Ascending aorta (tissue), 2 donors: ENCODE measurements at regions of chr12 and their contacts with region 1.

Region 1: DNA sequence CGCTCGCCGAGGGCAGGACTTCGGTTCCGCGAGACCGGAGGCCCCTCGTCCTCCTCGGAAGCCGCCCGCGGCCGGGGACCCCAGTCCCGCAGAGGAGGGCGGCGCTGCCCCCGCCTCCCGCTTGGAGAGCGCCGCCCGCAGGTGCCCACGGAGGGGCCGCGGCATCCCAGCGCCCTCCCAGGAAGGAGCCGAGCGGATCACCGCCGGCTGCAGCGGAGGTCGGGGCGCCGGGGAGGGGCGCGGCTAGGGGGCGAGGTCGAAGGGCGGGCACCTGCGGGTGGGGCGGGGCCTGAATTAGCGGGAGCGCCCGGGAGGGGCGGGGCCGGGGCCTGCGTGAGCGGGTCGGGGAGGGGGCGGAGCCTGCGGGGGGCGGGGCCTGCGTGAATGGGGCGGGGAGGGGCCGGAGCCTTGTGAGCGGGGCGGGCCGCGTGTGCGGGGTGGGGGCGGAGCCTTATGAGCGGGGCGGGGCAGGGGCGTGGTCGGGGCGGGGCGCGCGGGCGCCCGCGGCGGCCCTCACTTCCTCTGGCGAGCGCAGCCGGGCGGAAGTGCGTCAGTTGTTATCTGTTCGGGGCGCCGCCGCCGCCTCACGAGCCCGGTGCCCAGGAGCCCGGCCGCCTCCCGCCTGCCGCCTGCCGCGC is at the start of gene FBRSL1:
- DNase-seq: peak; percentile 47 to 94
- H3K4me3 ChIP-seq: peak within 1 kb of the TSS; percentile 79 to 92
- H3K27ac ChIP-seq: peak within 1 kb of the TSS; percentile 42 to 60
- H3K4me1 ChIP-seq: peaks cover 10 to 32% of the 10 kb centered on the region in 2 donors
- H3K27me3 ChIP-seq: no peaks in the 10 kb centered on the region
- CTCF ChIP-seq: no peak
- total RNA-seq, gene FBRSL1: 40.7 TPM

Region 2: GRCh38 chr12:131710464-131711457 is 779.0 kb before region 1 on chr12 and contains the start of gene SFSWAP:
- intact Hi-C with region 1: loop called (anchors 5 kb)
- DNase-seq: peak in 1 of 2 donors; percentile 78
- H3K4me3 ChIP-seq: peak within 1 kb of the TSS; percentile 69 to 73
- H3K27ac ChIP-seq: peak within 1 kb of the TSS; percentile 86 to 96
- H3K4me1 ChIP-seq: peaks cover 8 to 16% of the 10 kb centered on the region in 2 donors
- H3K27me3 ChIP-seq: no peaks in the 10 kb centered on the region
- CTCF ChIP-seq: no peak
- total RNA-seq, gene SFSWAP: 15.8 TPM

Region 3: DNA sequence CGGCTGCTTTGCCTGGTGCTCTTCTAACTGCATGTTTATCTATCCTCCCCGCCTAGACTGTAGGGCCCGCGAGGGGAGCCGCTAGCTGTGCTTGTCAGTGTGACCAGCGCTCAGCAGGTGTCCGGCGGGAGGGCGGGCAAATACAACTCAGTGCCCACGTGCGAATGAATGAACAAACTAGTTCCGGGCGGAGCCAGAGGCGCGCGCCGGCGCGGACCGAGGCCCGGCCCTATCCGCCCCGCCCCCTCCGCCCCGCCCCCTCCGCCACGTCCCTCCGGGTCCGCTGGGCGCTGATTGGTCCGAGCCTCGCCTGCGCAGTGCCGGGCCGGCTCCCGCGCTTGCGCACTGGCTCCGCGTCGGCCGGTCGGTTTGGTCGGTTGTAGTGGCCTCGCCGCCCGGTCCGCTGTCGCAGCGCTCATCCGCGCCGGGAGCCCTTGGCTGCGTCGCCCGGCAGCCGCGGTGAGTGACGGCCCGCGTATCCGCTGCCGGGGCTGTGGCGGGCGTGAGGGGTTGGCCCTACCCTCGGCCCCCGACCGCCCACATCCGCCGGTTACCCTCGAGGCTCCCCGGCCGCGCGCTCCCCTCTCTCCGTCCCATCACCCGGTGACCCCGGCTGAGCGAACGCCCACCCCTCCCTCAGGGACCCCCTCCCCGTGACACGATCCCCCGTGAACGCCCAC is 405.6 kb before region 1 on chr12:
- intact Hi-C with region 1: loop called (anchors 1 kb)
- DNase-seq: peak; percentile 69 to 94
- H3K4me3 ChIP-seq: peak overlapping the region; percentile 75 to 82
- H3K27ac ChIP-seq: peak overlapping the region; percentile 88 to 93
- H3K4me1 ChIP-seq: peaks cover 4 to 16% of the 10 kb centered on the region in 2 donors
- H3K27me3 ChIP-seq: no peaks in the 10 kb centered on the region
- CTCF ChIP-seq: no peak

Region 4: GRCh38 chr12:132189378-132190011 is 300.2 kb before region 1 on chr12:
- intact Hi-C with region 1: loop called (anchors 5 kb)
- DNase-seq: peak; percentile 76 to 95
- H3K4me3 ChIP-seq: peak overlapping the region; percentile 54 to 73
- H3K27ac ChIP-seq: peak overlapping the region; percentile 68 to 76
- H3K4me1 ChIP-seq: peaks cover 7% of the 10 kb centered on the region in 2 donors
- H3K27me3 ChIP-seq: no peaks in the 10 kb centered on the region
- CTCF ChIP-seq: no peak

Region 5: DNA sequence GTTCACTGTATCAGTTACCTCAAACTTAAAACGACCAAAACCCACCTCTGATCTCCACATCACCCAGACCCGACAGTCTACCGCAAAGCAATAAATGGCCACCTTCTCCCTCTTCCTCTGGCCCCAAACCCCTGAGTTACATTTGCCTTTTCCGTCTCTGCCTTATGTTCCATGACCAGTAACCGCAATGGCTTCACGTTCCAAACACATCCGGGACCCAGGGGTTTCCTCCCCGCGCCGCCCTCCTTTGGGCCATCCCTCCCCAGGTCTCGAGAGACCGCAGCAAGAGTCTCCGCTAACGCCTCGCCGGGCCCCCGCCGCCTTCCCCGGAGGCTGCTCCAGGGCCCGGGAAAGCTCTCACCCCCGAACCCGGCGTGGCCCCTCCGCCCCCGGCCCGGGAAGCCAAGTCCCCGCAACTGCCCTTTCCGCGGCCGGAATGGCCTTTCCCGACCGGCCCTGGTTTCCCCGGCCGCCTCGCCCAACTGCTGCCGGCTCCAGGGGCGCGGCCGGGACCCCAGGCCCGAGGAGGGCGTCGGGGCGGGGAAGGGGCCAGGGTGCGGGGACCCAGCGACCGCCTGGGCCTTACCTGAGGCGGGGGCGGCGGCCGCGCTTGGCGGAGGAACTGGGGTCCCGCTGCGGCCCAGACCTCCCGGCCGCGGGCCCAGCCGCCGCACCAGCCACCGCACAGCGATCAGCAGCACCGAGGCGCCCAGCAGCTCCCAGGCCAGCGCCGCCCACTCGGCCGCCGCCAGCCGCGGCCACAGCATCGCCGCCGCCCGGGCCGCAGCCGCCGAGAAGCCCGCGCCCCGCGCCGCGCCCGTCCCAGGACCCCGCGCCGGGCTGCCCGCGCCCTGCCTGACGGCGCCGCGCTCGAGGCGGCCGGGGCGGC is 271.6 kb after region 1 on chr12 and contains the start of gene ANKLE2:
- intact Hi-C with region 1: loop called (anchors 5 kb)
- DNase-seq: peak in 1 of 2 donors; percentile 73
- H3K4me3 ChIP-seq: peak within 1 kb of the TSS; percentile 100
- H3K27ac ChIP-seq: peak within 1 kb of the TSS; percentile 97 to 99
- H3K4me1 ChIP-seq: peaks cover 13% of the 10 kb centered on the region in 2 donors
- H3K27me3 ChIP-seq: no peaks in the 10 kb centered on the region
- CTCF ChIP-seq: no peak
- total RNA-seq, gene ANKLE2: 54.2 TPM